CD14-positive monocyte (primary cell): ENCODE measurements at regions of chr3 and their contacts with region 1.

Region 1: DNA sequence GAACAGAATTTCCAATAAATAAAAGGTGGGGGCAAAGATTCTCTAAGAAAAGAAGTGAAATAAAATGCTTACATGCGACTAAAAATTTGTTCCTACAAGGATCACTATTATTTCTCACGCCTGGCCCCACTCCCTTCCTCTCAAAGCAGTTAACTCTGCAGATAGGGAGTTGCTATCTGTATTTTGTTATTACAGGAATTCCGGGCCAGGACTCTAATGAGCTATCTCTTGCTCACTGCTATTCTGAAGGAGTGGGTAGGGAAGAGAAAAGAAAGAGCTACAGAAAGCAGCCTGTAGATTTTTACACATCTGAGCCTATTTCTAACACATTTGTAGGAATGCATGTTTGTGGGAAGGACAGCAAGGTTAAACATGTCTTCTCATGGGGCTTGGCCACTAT is 140.4 kb downstream of the PCCB start:
- DNase-seq: no peak
- H3K4me3 ChIP-seq: no peak overlapping the region
- H3K4me3 Mint-ChIP-seq: no peak overlapping the region
- H3K27ac ChIP-seq: no peak overlapping the region
- H3K27ac Mint-ChIP-seq: no peak overlapping the region
- H3K4me1 ChIP-seq: no peaks in the 10 kb centered on the region
- H3K4me1 Mint-ChIP-seq: no peaks in the 10 kb centered on the region
- H3K27me3 ChIP-seq: no peaks in the 10 kb centered on the region
- H3K27me3 Mint-ChIP-seq: no peaks in the 10 kb centered on the region
- CTCF ChIP-seq: no peak

Region 2: DNA sequence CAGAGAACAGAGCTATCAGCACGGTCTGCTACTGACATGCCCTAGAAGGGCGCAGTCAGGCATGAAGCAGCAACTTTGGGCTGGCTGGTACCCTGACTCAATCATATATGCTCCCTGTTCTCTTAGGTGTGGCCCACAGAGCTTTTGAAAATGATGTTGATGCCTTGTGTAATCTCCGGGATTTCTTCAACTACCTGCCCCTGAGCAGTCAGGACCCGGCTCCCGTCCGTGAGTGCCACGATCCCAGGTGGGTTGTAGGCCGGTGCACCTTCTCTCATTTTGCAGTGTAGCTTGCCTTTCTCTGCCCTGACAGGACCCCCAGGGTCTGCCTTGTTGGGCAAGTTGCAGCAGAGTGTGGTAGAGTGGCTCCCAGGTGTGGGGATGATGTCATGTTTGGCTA is 92.7 kb before region 1 on chr3:
- intact Hi-C with region 1: no loop called
- DNase-seq: no peak
- H3K4me3 ChIP-seq: no peak overlapping the region
- H3K4me3 Mint-ChIP-seq: no peak overlapping the region
- H3K27ac ChIP-seq: no peak overlapping the region
- H3K27ac Mint-ChIP-seq: peak overlapping the region in 3 of 7 donors; percentile 3 to 51 (median 40)
- H3K4me1 ChIP-seq: no peaks in the 10 kb centered on the region
- H3K4me1 Mint-ChIP-seq: no peaks in the 10 kb centered on the region
- H3K27me3 ChIP-seq: no peaks in the 10 kb centered on the region
- H3K27me3 Mint-ChIP-seq: peaks cover 0 to 1% (median 0%) of the 10 kb centered on the region in 3 donors
- CTCF ChIP-seq: no peak

Region 3: DNA sequence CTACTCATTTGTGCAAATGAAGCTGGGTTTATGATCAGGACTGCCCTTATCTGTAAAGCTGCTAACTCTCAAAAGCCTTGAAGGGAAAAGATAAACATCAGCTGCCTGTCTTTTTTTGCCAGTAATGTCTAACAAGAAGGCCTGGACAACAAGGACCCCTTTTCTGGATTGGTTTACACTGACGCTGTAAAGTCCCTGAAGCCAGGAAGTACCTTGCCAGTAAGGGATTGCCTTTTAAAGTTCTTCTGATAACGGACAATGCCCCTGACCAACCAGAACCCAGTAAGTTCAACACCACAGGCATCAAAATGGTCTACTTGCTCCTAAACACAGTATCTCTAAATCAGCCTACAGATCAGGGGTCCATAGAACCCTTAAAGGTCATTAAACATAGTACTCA is 37.6 kb after region 1 on chr3:
- intact Hi-C with region 1: no loop called
- DNase-seq: no peak
- H3K4me3 ChIP-seq: no peak overlapping the region
- H3K4me3 Mint-ChIP-seq: no peak overlapping the region
- H3K27ac ChIP-seq: no peak overlapping the region
- H3K27ac Mint-ChIP-seq: no peak overlapping the region
- H3K4me1 ChIP-seq: no peaks in the 10 kb centered on the region
- H3K4me1 Mint-ChIP-seq: no peaks in the 10 kb centered on the region
- H3K27me3 ChIP-seq: no peaks in the 10 kb centered on the region
- H3K27me3 Mint-ChIP-seq: peaks cover 0 to 2% (median 0%) of the 10 kb centered on the region in 3 donors
- CTCF ChIP-seq: no peak

Region 4: GRCh38 chr3:137013955-137014688 is 623.5 kb after region 1 on chr3:
- intact Hi-C with region 1: loop called (anchors 5 kb)
- DNase-seq: peak; percentile 74 to 80 (median 78)
- H3K4me3 ChIP-seq: peak overlapping the region; percentile 42 to 73 (median 72)
- H3K4me3 Mint-ChIP-seq: peak overlapping the region; percentile 81 to 96
- H3K27ac ChIP-seq: no peak overlapping the region
- H3K27ac Mint-ChIP-seq: peak overlapping the region in 4 of 7 donors; percentile 0 to 76 (median 63)
- H3K4me1 ChIP-seq: peaks cover 0 to 11% of the 10 kb centered on the region in 2 donors
- H3K4me1 Mint-ChIP-seq: peaks cover 12% of the 10 kb centered on the region
- H3K27me3 ChIP-seq: no peaks in the 10 kb centered on the region
- H3K27me3 Mint-ChIP-seq: no peaks in the 10 kb centered on the region
- CTCF ChIP-seq: peak; percentile 91